ENCODE measurements at regions of chr2 and their contacts with region 1.

Region 1: GRCh38 chr2:55175254-55176025 is 56.7 kb downstream of the CLHC1 start:
- DNase-seq: no peak
- ATAC-seq: peak; percentile 84
- H3K4me3 ChIP-seq: no peak overlapping the region
- H3K27ac ChIP-seq: no peak overlapping the region
- H3K4me1 ChIP-seq: no peaks in the 10 kb centered on the region
- H3K27me3 ChIP-seq: no peaks in the 10 kb centered on the region
- CTCF ChIP-seq: peak; percentile 62

Region 2: GRCh38 chr2:54899576-54900200 is 275.8 kb before region 1 on chr2:
- intact Hi-C with region 1: loop called (anchors 10 kb)
- DNase-seq: no peak
- ATAC-seq: peak; percentile 79
- H3K4me3 ChIP-seq: no peak overlapping the region
- H3K27ac ChIP-seq: no peak overlapping the region
- H3K4me1 ChIP-seq: no peaks in the 10 kb centered on the region
- H3K27me3 ChIP-seq: no peaks in the 10 kb centered on the region
- CTCF ChIP-seq: peak; percentile 61

Region 3: DNA sequence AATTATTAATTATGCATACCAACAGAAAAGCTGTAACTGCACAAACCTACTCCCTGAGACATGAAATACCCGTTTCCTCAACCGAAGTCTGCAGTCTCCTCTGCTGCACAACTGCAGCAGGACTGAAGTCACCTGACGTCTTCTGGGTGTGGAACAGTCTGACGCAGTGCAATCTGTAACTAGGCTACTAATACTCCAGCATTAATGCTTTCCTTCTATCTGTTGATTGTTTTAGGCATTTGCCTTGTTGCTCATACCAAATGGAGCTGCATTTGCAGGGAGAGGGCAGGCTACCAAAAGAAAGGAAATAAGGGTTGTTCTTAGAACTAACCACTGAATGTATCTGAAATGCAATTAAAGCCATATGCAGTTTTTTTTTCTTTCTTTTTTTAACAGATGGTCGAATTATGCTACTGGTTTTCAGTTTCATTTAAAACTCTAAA is 165.3 kb before region 1 on chr2:
- intact Hi-C with region 1: loop called (anchors 5 kb)
- DNase-seq: peak; percentile 64
- ATAC-seq: peak; percentile 96
- H3K4me3 ChIP-seq: peak overlapping the region; percentile 45
- H3K27ac ChIP-seq: peak overlapping the region; percentile 67
- H3K4me1 ChIP-seq: peaks cover 72% of the 10 kb centered on the region
- H3K27me3 ChIP-seq: no peaks in the 10 kb centered on the region
- CTCF ChIP-seq: no peak

Region 4: DNA sequence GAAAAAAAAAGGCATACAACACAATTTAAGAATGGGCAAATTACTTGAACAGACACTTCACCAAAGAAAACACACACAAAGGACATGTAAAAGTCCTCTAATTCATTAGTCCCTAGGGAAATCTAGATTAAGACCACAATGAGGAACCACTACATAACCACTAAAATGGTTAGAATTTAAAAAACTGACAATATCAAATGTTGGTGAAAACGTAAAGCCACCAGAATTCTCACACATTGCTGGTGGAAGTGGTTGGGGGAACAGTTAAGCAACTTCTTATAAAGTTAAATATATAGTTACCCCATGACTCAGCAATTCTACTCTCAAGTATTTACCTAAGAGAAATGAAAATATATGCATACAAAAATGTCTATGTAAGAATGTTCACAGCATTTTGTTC is 137.0 kb before region 1 on chr2:
- intact Hi-C with region 1: no loop called
- DNase-seq: no peak
- ATAC-seq: no peak
- H3K4me3 ChIP-seq: no peak overlapping the region
- H3K27ac ChIP-seq: no peak overlapping the region
- H3K4me1 ChIP-seq: peaks cover 17% of the 10 kb centered on the region
- H3K27me3 ChIP-seq: no peaks in the 10 kb centered on the region
- CTCF ChIP-seq: no peak

Measured in upper lobe of right lung (tissue), 1 donor.